ENCODE measurements at regions of chr5 and their contacts with region 1.

Region 1: DNA sequence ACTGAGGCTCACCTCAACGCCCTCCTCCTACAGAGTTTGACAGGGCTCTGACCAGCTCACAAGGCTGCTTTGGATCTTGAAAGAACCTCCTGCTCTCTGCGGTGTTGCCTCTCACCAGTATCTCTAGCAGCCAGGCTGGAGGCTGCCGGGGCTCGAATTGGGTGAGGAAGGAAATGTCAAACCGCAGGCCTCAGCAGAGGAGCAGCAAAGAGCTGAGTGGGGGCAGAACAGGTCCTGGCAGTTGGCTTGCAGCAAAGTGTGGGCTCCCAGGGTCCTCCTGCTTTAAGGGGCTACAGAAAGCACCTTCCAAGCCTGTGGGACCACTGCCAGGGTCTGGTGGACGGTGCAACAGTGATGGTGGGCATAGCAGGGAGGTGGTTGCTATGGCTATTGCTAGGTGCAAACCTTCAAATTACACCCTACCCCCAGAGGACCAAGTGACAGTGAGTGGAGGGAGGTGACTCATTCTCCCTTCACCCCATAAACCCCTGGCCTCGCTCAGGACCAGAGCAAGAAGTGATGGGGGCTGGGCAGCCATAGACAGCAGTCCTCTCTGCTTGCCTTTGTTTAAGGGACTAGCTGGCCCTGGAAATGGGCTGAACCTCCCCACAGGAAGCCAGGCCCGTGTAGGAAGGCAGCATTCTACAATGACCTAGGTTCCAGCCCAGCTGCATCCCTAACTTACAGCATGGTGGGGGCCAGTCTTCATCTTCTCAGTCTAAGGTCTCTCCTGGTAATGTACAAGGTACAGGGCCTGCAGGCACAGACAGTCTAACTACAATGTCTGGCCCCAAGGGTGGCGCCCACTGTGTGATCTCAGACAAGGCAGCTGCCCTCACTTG is 18.7 kb downstream of the LCP2 start:
- DNase-seq: peak; percentile 81 to 95
- ATAC-seq: peak; percentile 69 to 85 (median 80)
- H3K4me3 ChIP-seq: peak overlapping the region; percentile 9
- H3K4me3 Mint-ChIP-seq: peak overlapping the region; percentile 79
- H3K27ac ChIP-seq: peak overlapping the region; percentile 78
- H3K27ac Mint-ChIP-seq: peak overlapping the region; percentile 94 to 99
- H3K4me1 ChIP-seq: peaks cover 97% of the 10 kb centered on the region
- H3K4me1 Mint-ChIP-seq: peaks cover 95 to 100% of the 10 kb centered on the region in 2 donors
- H3K27me3 ChIP-seq: no peaks in the 10 kb centered on the region
- H3K27me3 Mint-ChIP-seq: no peaks in the 10 kb centered on the region
- CTCF ChIP-seq: no peak

Region 2: GRCh38 chr5:170253844-170254455 is 24.9 kb before region 1 on chr5:
- intact Hi-C with region 1: loop called (anchors 2 kb)
- DNase-seq: peak in 1 of 2 donors; percentile 88
- ATAC-seq: peak; percentile 83 to 91 (median 85)
- H3K4me3 ChIP-seq: no peak overlapping the region
- H3K4me3 Mint-ChIP-seq: no peak overlapping the region
- H3K27ac ChIP-seq: peak overlapping the region; percentile 54
- H3K27ac Mint-ChIP-seq: peak overlapping the region; percentile 73 to 84
- H3K4me1 ChIP-seq: peaks cover 13% of the 10 kb centered on the region
- H3K4me1 Mint-ChIP-seq: peaks cover 48 to 63% of the 10 kb centered on the region in 2 donors
- H3K27me3 ChIP-seq: no peaks in the 10 kb centered on the region
- H3K27me3 Mint-ChIP-seq: no peaks in the 10 kb centered on the region
- CTCF ChIP-seq: no peak

Region 3: GRCh38 chr5:170267431-170268152 is 11.2 kb before region 1 on chr5:
- intact Hi-C with region 1: loop called (anchors 1 kb)
- DNase-seq: peak; percentile 71 to 95
- ATAC-seq: peak; percentile 69 to 78 (median 76)
- H3K4me3 ChIP-seq: no peak overlapping the region
- H3K4me3 Mint-ChIP-seq: peak overlapping the region; percentile 79
- H3K27ac ChIP-seq: peak overlapping the region; percentile 61
- H3K27ac Mint-ChIP-seq: peak overlapping the region; percentile 94 to 99
- H3K4me1 ChIP-seq: peaks cover 51% of the 10 kb centered on the region
- H3K4me1 Mint-ChIP-seq: peaks cover 60 to 65% of the 10 kb centered on the region in 2 donors
- H3K27me3 ChIP-seq: no peaks in the 10 kb centered on the region
- H3K27me3 Mint-ChIP-seq: no peaks in the 10 kb centered on the region
- CTCF ChIP-seq: peak; percentile 77

Region 4: DNA sequence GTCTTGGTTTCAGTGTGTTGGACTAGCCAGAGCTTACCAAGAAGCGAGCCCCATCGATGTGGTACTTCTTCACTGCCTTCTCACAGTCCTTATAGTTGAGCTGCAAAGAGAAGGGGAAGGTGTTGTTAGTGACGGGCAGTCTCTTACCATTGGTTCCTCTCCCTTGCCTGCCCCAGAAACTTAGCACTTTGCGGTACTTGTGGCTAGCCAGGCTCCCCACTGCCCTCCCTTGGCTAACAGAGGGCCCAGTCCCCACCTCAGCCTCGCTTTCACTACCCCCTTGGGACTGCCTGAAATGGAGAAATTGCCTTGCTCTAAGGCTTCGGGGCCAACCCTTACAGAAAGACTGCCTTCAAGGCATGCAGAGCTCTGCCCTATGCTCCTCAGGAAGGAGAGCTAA is 14.4 kb after region 1 on chr5:
- intact Hi-C with region 1: loop called (anchors 1 kb)
- DNase-seq: peak; percentile 78 to 79
- ATAC-seq: peak; percentile 61 to 87 (median 86)
- H3K4me3 ChIP-seq: peak overlapping the region; percentile 90
- H3K4me3 Mint-ChIP-seq: peak overlapping the region; percentile 100
- H3K27ac ChIP-seq: peak overlapping the region; percentile 32
- H3K27ac Mint-ChIP-seq: peak overlapping the region; percentile 94 to 99
- H3K4me1 ChIP-seq: peaks cover 70% of the 10 kb centered on the region
- H3K4me1 Mint-ChIP-seq: peaks cover 99 to 100% of the 10 kb centered on the region in 2 donors
- H3K27me3 ChIP-seq: no peaks in the 10 kb centered on the region
- H3K27me3 Mint-ChIP-seq: no peaks in the 10 kb centered on the region
- CTCF ChIP-seq: no peak

Region 5: DNA sequence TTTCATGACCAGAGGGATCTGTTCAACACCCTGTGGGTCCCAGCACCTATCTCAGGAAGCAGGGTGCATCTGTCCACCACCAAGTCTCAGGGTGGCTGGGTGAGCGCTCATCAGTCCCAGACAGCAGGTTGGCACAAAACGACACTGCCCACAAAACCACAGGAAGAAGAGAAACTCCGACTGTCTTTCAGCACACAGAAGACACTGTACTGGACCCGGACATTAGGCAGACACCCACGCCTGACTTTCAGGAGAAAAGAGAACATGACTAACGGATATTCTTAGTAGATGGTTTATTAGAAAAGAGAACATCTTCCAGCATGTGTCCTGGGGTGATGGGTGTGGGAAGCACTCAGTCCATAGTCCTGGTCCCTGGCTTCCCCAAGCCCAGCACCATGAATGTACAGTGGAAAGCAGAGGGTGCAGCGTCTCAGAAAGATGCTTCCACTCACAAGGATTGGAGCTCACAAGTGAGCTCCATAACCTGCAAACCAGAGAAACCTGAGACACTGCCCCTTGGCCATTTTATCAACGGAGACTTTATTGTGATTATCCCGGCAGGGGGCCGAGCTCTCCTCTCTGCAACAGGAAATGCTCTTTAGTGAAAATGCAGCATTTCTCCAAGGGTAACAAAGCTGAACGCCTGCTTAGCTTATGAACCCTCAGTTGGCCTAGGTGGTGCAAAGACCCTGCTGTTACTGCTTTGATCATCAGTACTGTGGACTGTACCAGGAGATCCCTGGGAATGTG is 54.5 kb after region 1 on chr5:
- intact Hi-C with region 1: loop called (anchors 1 kb)
- DNase-seq: peak; percentile 49 to 85
- ATAC-seq: peak; percentile 32 to 63 (median 62)
- H3K4me3 ChIP-seq: no peak overlapping the region
- H3K4me3 Mint-ChIP-seq: peak overlapping the region; percentile 63
- H3K27ac ChIP-seq: peak overlapping the region; percentile 88
- H3K27ac Mint-ChIP-seq: no peak overlapping the region
- H3K4me1 ChIP-seq: peaks cover 81% of the 10 kb centered on the region
- H3K4me1 Mint-ChIP-seq: peaks cover 10 to 36% of the 10 kb centered on the region in 2 donors
- H3K27me3 ChIP-seq: no peaks in the 10 kb centered on the region
- H3K27me3 Mint-ChIP-seq: no peaks in the 10 kb centered on the region
- CTCF ChIP-seq: no peak

Region 6: DNA sequence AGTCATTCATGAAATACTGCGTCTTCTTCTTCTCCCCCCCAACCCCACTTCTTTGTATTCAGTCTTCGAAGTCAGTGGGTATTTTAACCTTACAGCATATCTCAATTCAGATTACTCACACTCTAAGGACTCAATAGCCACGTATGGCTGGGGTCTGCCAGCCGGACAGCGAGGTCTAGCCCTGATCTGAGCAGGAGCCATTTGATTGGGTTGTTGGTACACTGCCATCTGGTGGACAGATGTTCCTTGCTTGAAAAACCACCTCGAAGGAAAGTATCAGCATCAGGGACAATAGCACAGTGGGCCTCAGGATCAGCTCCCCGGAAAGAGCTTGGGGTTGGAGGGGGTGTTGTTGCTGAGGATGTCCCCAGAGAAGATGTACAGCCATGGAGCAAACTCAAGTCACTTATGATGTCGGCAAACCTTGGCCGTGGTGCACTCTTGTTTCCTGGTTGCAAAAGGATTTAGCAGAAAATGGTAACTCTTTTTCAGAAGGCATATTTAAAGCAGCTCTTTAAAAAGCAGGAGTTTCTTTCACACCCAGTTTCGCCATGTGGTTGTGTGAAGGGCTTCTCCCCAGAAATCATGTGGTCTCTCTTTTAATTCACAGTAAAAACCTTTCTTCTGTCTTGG is 142.1 kb after region 1 on chr5:
- intact Hi-C with region 1: loop called (anchors 2 kb)
- DNase-seq: peak; percentile 35 to 82
- ATAC-seq: peak; percentile 42 to 73 (median 68)
- H3K4me3 ChIP-seq: no peak overlapping the region
- H3K4me3 Mint-ChIP-seq: no peak overlapping the region
- H3K27ac ChIP-seq: no peak overlapping the region
- H3K27ac Mint-ChIP-seq: no peak overlapping the region
- H3K4me1 ChIP-seq: peaks cover 4% of the 10 kb centered on the region
- H3K4me1 Mint-ChIP-seq: peaks cover 0 to 5% of the 10 kb centered on the region in 2 donors
- H3K27me3 ChIP-seq: no peaks in the 10 kb centered on the region
- H3K27me3 Mint-ChIP-seq: peaks cover 14 to 16% of the 10 kb centered on the region in 2 donors
- CTCF ChIP-seq: peak; percentile 74

Measured in natural killer cell (primary cell).